Gastrocnemius medialis (tissue), 4 donors: ENCODE measurements at regions of chr19 and their contacts with region 1.

Region 1: GRCh38 chr19:44212250-44212865 is at the start of gene ZNF227:
- DNase-seq: peak; percentile 85 to 92
- ATAC-seq: peak; percentile 97 to 98
- H3K4me3 ChIP-seq: peak within 1 kb of the TSS; percentile 70 to 98 (median 81)
- H3K27ac ChIP-seq: peak within 1 kb of the TSS; percentile 87 to 91 (median 90)
- H3K4me1 ChIP-seq: peaks cover 13 to 18% of the 10 kb centered on the region in 2 donors
- H3K27me3 ChIP-seq: no peaks in the 10 kb centered on the region
- CTCF ChIP-seq: no peak
- POLR2A ChIP-seq: peak; percentile 32 to 53
- total RNA-seq, gene ZNF227: 6.8 to 17.7 (median 8.3) TPM

Region 2: GRCh38 chr19:43826787-43827754 is 385.3 kb before region 1 on chr19 and contains the start of gene ZNF283:
- in situ Hi-C with region 1: no loop called
- intact Hi-C with region 1: loop called (anchors 1 kb)
- DNase-seq: peak; percentile 79 to 85
- ATAC-seq: peak; percentile 99 to 100
- H3K4me3 ChIP-seq: peak within 1 kb of the TSS; percentile 65 to 80 (median 72)
- H3K27ac ChIP-seq: peak within 1 kb of the TSS; percentile 71 to 77 (median 72)
- H3K4me1 ChIP-seq: peaks cover 4 to 6% of the 10 kb centered on the region in 2 donors
- H3K27me3 ChIP-seq: peaks cover 0 to 1% (median 0%) of the 10 kb centered on the region in 3 donors
- CTCF ChIP-seq: no peak
- POLR2A ChIP-seq: no peak
- total RNA-seq, gene ZNF283: 1.4 to 7.3 (median 2.1) TPM

Region 3: GRCh38 chr19:43855616-43856015 is 356.7 kb before region 1 on chr19:
- in situ Hi-C with region 1: no loop called
- intact Hi-C with region 1: no loop called
- DNase-seq: no peak
- ATAC-seq: no peak
- H3K4me3 ChIP-seq: no peak overlapping the region
- H3K27ac ChIP-seq: no peak overlapping the region
- H3K4me1 ChIP-seq: no peaks in the 10 kb centered on the region
- H3K27me3 ChIP-seq: no peaks in the 10 kb centered on the region
- CTCF ChIP-seq: no peak
- POLR2A ChIP-seq: no peak

Region 4: DNA sequence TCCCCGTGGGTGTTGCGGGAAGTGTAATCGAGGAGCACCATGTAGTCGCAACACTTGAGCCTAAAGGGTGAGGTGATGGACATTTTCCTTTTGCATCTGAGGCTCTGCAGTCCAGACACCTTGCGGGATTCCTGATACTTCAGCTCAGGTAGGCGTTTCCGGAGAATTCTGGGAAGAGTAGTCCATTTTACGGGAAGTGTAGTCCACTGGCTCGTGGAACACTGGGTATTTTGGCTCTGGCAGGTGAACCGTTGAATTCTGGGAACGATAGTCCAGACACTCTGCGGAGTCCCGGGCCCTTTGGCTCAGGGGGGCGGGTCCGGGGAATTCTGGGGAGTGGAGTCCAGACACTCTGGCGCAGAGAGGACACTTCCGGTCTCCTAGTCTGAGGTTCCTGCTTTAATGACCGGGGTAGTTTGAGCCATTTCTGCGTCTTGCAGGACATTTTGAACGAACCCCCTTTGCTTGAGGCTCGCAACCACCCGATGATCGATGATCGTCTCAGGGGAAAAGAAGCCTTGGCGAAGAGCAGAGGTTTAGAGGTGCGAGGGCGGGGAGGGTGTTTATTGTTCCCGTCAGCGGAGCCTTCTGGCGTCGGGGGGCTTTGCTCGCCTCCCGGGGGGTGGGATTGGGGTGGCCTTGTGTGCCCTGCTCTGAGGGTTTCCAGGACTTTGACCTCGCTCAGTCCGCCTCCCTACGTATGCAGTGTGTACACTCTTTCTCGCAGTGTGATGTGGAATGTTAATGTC is 160.5 kb before region 1 on chr19 and contains the start of gene ZNF223:
- in situ Hi-C with region 1: no loop called
- intact Hi-C with region 1: loop called (anchors 5 kb)
- DNase-seq: peak; percentile 94
- ATAC-seq: peak; percentile 100
- H3K4me3 ChIP-seq: peak within 1 kb of the TSS; percentile 72 to 84 (median 81)
- H3K27ac ChIP-seq: peak within 1 kb of the TSS; percentile 73 to 81 (median 78)
- H3K4me1 ChIP-seq: peaks cover 12 to 18% of the 10 kb centered on the region in 2 donors
- H3K27me3 ChIP-seq: peaks cover 0 to 25% (median 5%) of the 10 kb centered on the region in 3 donors
- CTCF ChIP-seq: no peak
- POLR2A ChIP-seq: no peak
- total RNA-seq, gene ZNF223: 0.56 to 3.0 (median 0.91) TPM in 3 of 4 donors, not detected in the other

Region 5: GRCh38 chr19:44093931-44094765 is 118.2 kb before region 1 on chr19 and contains the start of gene ZNF224:
- in situ Hi-C with region 1: no loop called
- intact Hi-C with region 1: loop called (anchors 1 kb)
- DNase-seq: peak; percentile 85 to 87
- ATAC-seq: peak; percentile 100
- H3K4me3 ChIP-seq: peak within 1 kb of the TSS; percentile 76 to 91 (median 80)
- H3K27ac ChIP-seq: peak within 1 kb of the TSS; percentile 70 to 82 (median 73)
- H3K4me1 ChIP-seq: peaks cover 7 to 10% of the 10 kb centered on the region in 2 donors
- H3K27me3 ChIP-seq: no peaks in the 10 kb centered on the region
- CTCF ChIP-seq: no peak
- POLR2A ChIP-seq: peak in 1 of 2 donors; percentile 41
- total RNA-seq, gene ZNF224: 4.9 to 14.1 (median 6.9) TPM

Region 6: DNA sequence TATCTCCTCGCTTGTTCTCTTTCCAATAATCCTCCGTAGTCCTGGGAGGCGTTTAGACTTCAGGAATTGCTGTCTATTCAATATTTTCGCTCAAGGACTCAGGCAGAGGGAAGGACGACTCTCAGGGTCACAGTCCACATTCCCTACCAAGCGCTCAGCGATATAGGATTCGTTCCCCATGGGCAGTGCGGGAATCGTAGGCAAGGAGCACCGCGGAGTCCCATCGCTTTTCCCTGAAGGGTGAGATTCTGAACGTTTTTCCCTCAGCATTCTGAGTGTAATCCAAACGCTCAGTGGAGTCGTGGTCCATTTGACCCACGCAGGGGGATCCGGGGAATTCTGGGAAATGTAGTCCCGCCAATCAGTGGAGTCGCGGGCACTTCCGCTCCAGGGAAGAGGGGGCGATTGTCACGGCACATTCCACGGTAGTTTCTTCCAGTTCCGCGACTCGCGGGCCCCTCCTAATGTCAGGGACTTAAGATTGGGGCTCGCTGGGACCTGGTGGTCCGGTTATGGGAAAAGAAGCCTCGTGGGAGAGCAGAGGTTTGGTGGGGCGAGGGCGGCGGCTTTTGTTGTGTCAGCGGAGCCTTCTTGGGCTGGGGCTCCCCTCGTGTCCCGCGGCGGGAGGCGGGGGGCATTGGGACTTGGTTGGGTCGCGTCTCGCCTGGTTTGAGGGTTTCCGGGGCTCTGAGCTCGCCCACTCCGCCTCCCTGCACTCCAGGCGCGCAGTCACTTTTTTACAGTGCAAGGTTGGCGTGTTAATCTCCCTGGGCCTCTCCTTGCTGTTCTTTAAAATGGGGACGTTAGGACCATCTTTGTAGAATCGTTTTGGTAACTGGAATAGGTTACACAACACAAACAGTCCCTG is 70.9 kb before region 1 on chr19 and contains the start of gene ZNF234:
- in situ Hi-C with region 1: no loop called
- intact Hi-C with region 1: loop called (anchors 1 kb)
- DNase-seq: peak; percentile 78
- ATAC-seq: peak; percentile 98 to 99
- H3K4me3 ChIP-seq: peak within 1 kb of the TSS; percentile 85 to 98 (median 88)
- H3K27ac ChIP-seq: peak within 1 kb of the TSS; percentile 78 to 87 (median 82)
- H3K4me1 ChIP-seq: peaks cover 14 to 18% of the 10 kb centered on the region in 2 donors
- H3K27me3 ChIP-seq: no peaks in the 10 kb centered on the region
- CTCF ChIP-seq: no peak
- POLR2A ChIP-seq: peak in 1 of 2 donors; percentile 42
- total RNA-seq, gene ZNF234: 2.2 to 3.5 (median 2.9) TPM

Region 7: GRCh38 chr19:44304659-44305193 is 92.4 kb after region 1 on chr19 and contains the start of gene ZNF235:
- in situ Hi-C with region 1: no loop called
- intact Hi-C with region 1: loop called (anchors 1 kb)
- DNase-seq: peak; percentile 88 to 94
- ATAC-seq: peak; percentile 100
- H3K4me3 ChIP-seq: peak within 1 kb of the TSS; percentile 64 to 86 (median 78)
- H3K27ac ChIP-seq: peak within 1 kb of the TSS; percentile 77 to 87 (median 82)
- H3K4me1 ChIP-seq: peaks cover 3 to 12% of the 10 kb centered on the region in 2 donors
- H3K27me3 ChIP-seq: no peaks in the 10 kb centered on the region
- CTCF ChIP-seq: no peak
- POLR2A ChIP-seq: peak in 1 of 2 donors; percentile 42
- total RNA-seq, gene ZNF235: 1.9 to 3.3 (median 2.1) TPM

Region 8: GRCh38 chr19:44500148-44500956 is 288.0 kb after region 1 on chr19 and contains the start of gene ZNF180:
- in situ Hi-C with region 1: no loop called
- intact Hi-C with region 1: loop called (anchors 1 kb)
- DNase-seq: peak; percentile 87 to 89
- ATAC-seq: peak; percentile 99
- H3K4me3 ChIP-seq: peak within 1 kb of the TSS; percentile 77 to 99 (median 88)
- H3K27ac ChIP-seq: peak within 1 kb of the TSS; percentile 75 to 90 (median 82)
- H3K4me1 ChIP-seq: peaks cover 12 to 17% of the 10 kb centered on the region in 2 donors
- H3K27me3 ChIP-seq: no peaks in the 10 kb centered on the region
- CTCF ChIP-seq: peak; percentile 73 to 83 (median 80)
- POLR2A ChIP-seq: peak; percentile 58 to 64
- total RNA-seq, gene ZNF180: 2.1 to 17.4 (median 5.1) TPM